Natural killer cell (primary cell): ENCODE measurements at regions of chr12 and their contacts with region 1.

Region 1: DNA sequence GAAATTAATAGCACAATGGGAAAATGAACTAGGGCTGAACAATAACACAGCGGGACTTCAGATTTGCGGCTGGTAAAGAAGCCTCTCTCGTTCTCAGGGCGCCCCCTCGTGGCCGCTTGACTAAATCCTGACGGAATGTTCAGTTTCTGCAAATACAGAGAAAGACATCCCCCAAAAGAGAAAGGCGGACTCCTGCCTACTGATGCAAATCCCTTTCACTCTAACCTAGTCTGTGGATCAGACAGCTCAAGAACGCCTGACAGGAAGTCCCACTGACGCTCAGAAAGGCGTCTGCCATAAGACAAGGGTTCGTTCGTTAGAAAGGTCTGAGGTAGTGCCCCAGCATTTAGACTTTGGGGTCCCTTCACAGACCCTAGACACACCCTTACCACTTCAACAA is 2.5 kb downstream of the NUAK1 start:
- DNase-seq: peak; percentile 75 to 77
- ATAC-seq: peak in 1 of 3 donors; percentile 34
- H3K4me3 ChIP-seq: no peak overlapping the region
- H3K4me3 Mint-ChIP-seq: no peak overlapping the region
- H3K27ac ChIP-seq: no peak overlapping the region
- H3K27ac Mint-ChIP-seq: no peak overlapping the region
- H3K4me1 ChIP-seq: peaks cover 24% of the 10 kb centered on the region
- H3K4me1 Mint-ChIP-seq: peaks cover 0 to 28% of the 10 kb centered on the region in 2 donors
- H3K27me3 ChIP-seq: peaks cover 20% of the 10 kb centered on the region
- H3K27me3 Mint-ChIP-seq: peaks cover 45 to 64% of the 10 kb centered on the region in 2 donors
- CTCF ChIP-seq: peak; percentile 83

Region 2: DNA sequence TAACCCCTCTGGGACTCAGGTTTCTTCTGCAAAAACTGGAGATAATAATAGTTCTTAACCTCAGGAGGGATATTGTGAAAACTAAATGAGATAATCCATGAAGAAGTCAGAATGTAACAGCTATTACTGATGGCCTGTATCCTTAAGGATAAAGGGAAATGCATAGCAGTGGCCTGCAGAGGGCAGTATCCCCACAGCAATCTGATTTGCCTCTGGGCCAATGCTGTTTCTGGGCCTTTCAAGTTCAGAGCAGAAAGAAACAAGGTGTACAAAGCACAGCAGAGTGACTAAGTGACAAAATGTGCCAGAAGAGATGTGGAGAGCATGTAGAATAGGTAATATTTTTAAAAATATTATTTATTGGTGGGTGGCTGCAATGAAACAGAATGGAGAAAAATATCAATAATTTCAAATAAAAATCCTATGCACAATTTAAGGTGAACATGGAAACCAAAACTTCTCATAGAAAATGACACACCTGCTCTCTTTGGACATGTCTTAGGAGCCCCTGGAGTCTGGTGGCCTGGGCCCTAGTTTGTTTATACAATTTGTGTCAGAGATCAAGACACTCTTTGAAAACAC is 715.5 kb before region 1 on chr12:
- intact Hi-C with region 1: loop called (anchors 1 kb)
- DNase-seq: peak; percentile 52 to 78
- ATAC-seq: peak; percentile 71 to 88 (median 78)
- H3K4me3 ChIP-seq: no peak overlapping the region
- H3K4me3 Mint-ChIP-seq: no peak overlapping the region
- H3K27ac ChIP-seq: no peak overlapping the region
- H3K27ac Mint-ChIP-seq: no peak overlapping the region
- H3K4me1 ChIP-seq: no peaks in the 10 kb centered on the region
- H3K4me1 Mint-ChIP-seq: no peaks in the 10 kb centered on the region
- H3K27me3 ChIP-seq: no peaks in the 10 kb centered on the region
- H3K27me3 Mint-ChIP-seq: peaks cover 0 to 3% of the 10 kb centered on the region in 2 donors
- CTCF ChIP-seq: peak; percentile 99

Region 3: DNA sequence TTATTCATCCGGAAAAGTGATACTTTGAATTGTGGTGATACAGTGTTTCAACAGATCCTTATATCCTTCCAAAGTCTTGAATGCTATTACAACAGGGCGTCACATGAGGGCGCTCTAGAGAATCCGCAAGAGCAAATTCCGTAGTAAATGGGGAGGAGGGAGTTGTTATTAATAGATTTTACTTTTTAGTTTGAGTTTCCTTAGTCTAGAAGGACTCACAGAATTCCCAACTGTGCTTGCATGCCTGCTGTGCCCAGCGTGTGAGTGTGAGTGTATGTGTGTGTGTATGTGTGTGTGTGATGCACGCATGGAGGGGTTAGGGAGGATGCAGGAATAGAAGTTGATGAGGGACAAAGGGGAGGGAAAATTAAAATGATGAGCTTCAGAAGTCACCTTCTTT is 430.5 kb before region 1 on chr12:
- intact Hi-C with region 1: loop called (anchors 2 kb)
- DNase-seq: peak in 1 of 2 donors; percentile 20
- ATAC-seq: no peak
- H3K4me3 ChIP-seq: no peak overlapping the region
- H3K4me3 Mint-ChIP-seq: no peak overlapping the region
- H3K27ac ChIP-seq: no peak overlapping the region
- H3K27ac Mint-ChIP-seq: no peak overlapping the region
- H3K4me1 ChIP-seq: no peaks in the 10 kb centered on the region
- H3K4me1 Mint-ChIP-seq: no peaks in the 10 kb centered on the region
- H3K27me3 ChIP-seq: no peaks in the 10 kb centered on the region
- H3K27me3 Mint-ChIP-seq: peaks cover 8 to 16% of the 10 kb centered on the region in 2 donors
- CTCF ChIP-seq: peak; percentile 44

Region 4: DNA sequence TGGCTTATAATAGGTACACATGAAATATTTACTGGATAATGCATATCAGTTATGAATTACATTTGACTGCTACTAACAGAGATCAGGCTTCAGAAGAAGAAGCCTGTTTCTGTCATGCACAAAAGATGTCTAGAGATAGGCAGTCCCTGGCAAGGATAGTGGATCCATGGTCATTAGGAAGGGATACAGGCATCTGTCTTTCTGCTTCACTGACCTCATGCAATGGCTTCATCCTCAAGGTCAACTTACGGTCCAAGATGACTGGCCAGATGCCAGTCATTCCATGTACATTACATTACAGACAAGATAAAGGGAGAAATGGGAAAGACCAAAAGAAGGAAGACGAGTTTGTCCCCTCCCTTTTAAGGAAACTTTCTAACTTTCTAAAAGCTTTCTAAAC is 91.5 kb before region 1 on chr12:
- intact Hi-C with region 1: no loop called
- DNase-seq: no peak
- ATAC-seq: no peak
- H3K4me3 ChIP-seq: no peak overlapping the region
- H3K4me3 Mint-ChIP-seq: no peak overlapping the region
- H3K27ac ChIP-seq: no peak overlapping the region
- H3K27ac Mint-ChIP-seq: no peak overlapping the region
- H3K4me1 ChIP-seq: no peaks in the 10 kb centered on the region
- H3K4me1 Mint-ChIP-seq: no peaks in the 10 kb centered on the region
- H3K27me3 ChIP-seq: no peaks in the 10 kb centered on the region
- H3K27me3 Mint-ChIP-seq: peaks cover 5 to 16% of the 10 kb centered on the region in 2 donors
- CTCF ChIP-seq: no peak